Endothelial cell of umbilical vein (primary cell): ENCODE measurements at regions of chr9 and their contacts with region 1.

Region 1: GRCh38 chr9:76677481-76678055 is 86.7 kb upstream of the PCA3 start:
- DNase-seq: peak; percentile 95
- H3K4me3 ChIP-seq: peak overlapping the region in 1 of 3 experiments; percentile 46
- H3K27ac ChIP-seq: peak overlapping the region; percentile 96
- H3K4me1 ChIP-seq: peaks cover 22% of the 10 kb centered on the region
- H3K27me3 ChIP-seq: no peaks in the 10 kb centered on the region
- CTCF ChIP-seq: no peak
- POLR2A ChIP-seq: no peak

Region 2: GRCh38 chr9:76651119-76651705 is 26.4 kb before region 1 on chr9:
- CTCF ChIA-PET with region 1: interaction called, 3 read pairs
- POLR2A ChIA-PET with region 1: no interaction called
- dilution Hi-C with region 1: no loop called
- intact Hi-C with region 1: loop called (anchors 2 kb)
- DNase-seq: peak; percentile 56
- H3K4me3 ChIP-seq: peak overlapping the region; percentile 15 to 64 (median 63)
- H3K27ac ChIP-seq: peak overlapping the region; percentile 34
- H3K4me1 ChIP-seq: peaks cover 47% of the 10 kb centered on the region
- H3K27me3 ChIP-seq: no peaks in the 10 kb centered on the region
- CTCF ChIP-seq: no peak
- POLR2A ChIP-seq: no peak

Region 3: DNA sequence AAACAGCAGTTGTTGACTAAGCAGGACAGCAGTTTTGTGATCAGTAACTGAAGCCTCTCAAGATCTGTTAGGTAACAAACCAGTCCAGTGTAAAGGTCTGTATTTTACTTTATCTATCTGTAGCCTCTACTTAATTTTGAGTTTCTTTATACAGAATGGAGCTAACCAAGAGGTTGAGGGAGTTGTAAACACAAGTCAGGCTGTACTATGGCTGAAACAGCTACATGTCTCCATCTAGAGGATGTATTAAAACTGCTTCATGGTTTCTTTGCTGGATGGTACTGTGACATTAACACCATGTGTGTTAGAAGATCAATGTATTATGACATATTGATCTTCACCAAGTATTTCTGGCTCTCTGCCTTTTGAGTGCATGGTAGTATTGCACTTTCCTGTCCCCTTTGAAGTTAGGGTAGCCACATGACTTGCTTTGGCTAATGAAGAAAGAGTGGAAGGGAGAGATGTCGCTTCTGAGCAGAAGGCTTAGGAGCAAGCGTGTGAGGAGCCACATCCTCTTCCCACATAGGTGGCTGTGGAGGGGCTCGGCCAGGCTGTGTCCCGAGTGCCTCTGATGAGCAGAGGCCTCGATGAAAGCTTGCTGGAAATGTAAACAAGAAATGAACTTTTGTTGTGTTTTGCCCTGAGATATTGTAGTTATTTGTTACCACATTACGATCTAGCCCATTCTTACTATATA is 18.9 kb before region 1 on chr9:
- CTCF ChIA-PET with region 1: interaction called, 17 read pairs
- POLR2A ChIA-PET with region 1: interaction called, 3 read pairs
- dilution Hi-C with region 1: no loop called
- intact Hi-C with region 1: loop called (anchors 2 kb)
- DNase-seq: peak; percentile 79
- H3K4me3 ChIP-seq: no peak overlapping the region
- H3K27ac ChIP-seq: no peak overlapping the region
- H3K4me1 ChIP-seq: peaks cover 51% of the 10 kb centered on the region
- H3K27me3 ChIP-seq: no peaks in the 10 kb centered on the region
- CTCF ChIP-seq: peak; percentile 37 to 54
- POLR2A ChIP-seq: no peak

Region 4: DNA sequence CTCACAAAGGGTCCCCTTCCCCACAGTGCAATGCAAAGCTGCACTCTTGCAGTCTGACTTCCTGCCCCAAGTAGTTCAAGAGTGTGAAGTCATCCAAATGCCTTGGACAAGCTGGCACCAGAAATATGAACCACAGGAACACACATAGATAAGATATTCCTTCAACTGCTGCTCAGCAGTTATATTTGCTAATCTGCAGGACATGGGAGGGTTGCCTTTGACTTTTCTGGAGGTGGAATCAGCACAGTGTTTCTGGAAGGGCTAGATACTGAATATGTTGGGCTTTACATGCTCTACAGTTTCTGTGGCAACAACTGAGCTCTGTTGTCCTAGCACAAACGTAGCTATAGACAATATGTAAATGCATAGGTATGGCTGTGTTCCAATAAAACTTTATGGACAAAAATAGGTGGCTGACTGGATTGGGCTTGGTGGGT is 10.0 kb before region 1 on chr9:
- CTCF ChIA-PET with region 1: interaction called, 17 read pairs
- POLR2A ChIA-PET with region 1: interaction called, 3 read pairs
- dilution Hi-C with region 1: no loop called
- intact Hi-C with region 1: loop called (anchors 1 kb)
- DNase-seq: peak; percentile 69
- H3K4me3 ChIP-seq: no peak overlapping the region
- H3K27ac ChIP-seq: peak overlapping the region; percentile 70
- H3K4me1 ChIP-seq: peaks cover 36% of the 10 kb centered on the region
- H3K27me3 ChIP-seq: no peaks in the 10 kb centered on the region
- CTCF ChIP-seq: no peak
- POLR2A ChIP-seq: no peak

Region 5: DNA sequence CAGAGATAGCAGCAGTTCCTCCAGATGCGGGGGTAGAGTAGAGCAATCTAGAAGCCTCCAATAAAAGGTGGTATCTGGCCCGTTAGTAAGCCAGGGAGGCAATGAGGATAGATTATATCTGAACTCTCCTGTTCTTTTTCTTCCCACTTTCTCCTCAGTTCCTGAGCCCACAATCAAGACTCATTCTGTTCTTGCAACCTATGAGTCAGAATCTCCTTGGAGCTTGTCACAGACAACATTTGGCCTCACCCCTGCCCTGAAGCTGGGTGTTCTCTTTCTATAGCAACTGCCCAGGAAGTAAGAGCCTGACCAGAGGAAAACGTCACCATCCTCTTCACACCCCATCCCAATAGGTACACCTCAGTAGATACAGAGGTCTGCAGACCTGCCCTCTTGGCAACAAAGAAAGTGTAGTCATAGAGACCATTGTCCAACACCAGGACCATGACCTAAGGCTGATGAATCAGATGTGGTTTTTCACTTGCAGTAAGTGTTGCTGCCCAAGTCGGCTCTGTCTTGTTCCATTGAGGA is 10.4 kb after region 1 on chr9:
- CTCF ChIA-PET with region 1: interaction called, 20 read pairs
- POLR2A ChIA-PET with region 1: no interaction called
- dilution Hi-C with region 1: no loop called
- intact Hi-C with region 1: loop called (anchors 1 kb)
- DNase-seq: peak; percentile 91
- H3K4me3 ChIP-seq: no peak overlapping the region
- H3K27ac ChIP-seq: peak overlapping the region; percentile 80
- H3K4me1 ChIP-seq: peaks cover 41% of the 10 kb centered on the region
- H3K27me3 ChIP-seq: no peaks in the 10 kb centered on the region
- CTCF ChIP-seq: no peak
- POLR2A ChIP-seq: peak; percentile 29

Region 6: GRCh38 chr9:76717613-76718012 is 40.0 kb after region 1 on chr9:
- CTCF ChIA-PET with region 1: no interaction called
- POLR2A ChIA-PET with region 1: no interaction called
- dilution Hi-C with region 1: no loop called
- intact Hi-C with region 1: loop called (anchors 1 kb)
- DNase-seq: peak; percentile 77
- H3K4me3 ChIP-seq: no peak overlapping the region
- H3K27ac ChIP-seq: peak overlapping the region; percentile 5
- H3K4me1 ChIP-seq: peaks cover 30% of the 10 kb centered on the region
- H3K27me3 ChIP-seq: peaks cover 1% of the 10 kb centered on the region in 2 experiments
- CTCF ChIP-seq: no peak
- POLR2A ChIP-seq: no peak

Region 7: DNA sequence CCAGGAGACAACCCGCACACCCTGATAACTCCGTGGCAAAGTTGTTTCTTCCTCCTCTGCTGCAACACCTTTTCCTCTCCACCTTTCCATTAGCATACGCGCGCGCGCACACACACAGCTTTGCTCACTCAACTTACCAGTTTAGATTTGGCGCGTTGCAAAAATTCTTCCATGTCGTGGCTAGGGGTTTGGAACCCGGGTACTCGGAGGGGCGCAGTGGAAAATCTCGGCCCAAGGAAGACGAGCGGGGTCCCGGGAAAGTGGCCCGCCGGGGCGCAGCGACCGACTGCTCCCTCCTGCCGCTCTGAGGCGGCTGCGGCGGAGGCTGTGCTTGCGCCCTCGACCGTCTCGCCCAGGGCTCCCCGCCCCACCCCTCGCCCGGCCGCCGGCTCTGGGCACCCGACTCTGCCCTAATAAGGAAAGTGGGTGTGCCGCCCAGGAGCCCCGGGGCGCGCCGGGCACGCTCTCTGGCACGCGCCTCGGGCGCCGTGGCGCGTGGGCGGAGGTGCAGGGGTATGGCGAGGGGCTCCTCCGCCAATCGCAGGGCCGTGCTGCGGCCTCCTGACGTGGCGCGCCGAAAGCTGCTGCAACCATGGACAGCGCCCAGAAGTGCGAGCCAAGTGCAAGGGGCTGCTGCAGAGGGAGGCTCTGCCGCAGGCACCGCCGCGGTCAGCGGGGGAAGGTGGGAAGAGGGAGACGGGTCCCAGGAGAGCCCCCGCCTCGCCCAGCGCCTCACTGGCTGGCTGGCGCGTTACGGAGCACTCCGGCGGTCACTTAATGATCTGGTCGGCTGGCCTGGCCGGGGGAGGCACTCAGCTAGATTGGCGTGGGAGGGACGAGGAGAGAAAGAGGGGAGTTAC is 228.5 kb after region 1 on chr9 and contains the start of gene PRUNE2:
- CTCF ChIA-PET with region 1: no interaction called
- POLR2A ChIA-PET with region 1: no interaction called
- dilution Hi-C with region 1: no loop called
- intact Hi-C with region 1: no loop called
- DNase-seq: peak; percentile 66
- H3K4me3 ChIP-seq: no peak within 1 kb of the TSS
- H3K27ac ChIP-seq: no peak within 1 kb of the TSS
- H3K4me1 ChIP-seq: no peaks in the 10 kb centered on the region
- H3K27me3 ChIP-seq: peaks cover 23 to 32% of the 10 kb centered on the region in 2 experiments
- CTCF ChIP-seq: no peak
- POLR2A ChIP-seq: no peak
- total RNA-seq, gene PRUNE2: 8.3 and 21.7 TPM in 2 replicates